ENCODE measurements at regions of chr2 and their contacts with region 1.

Region 1: GRCh38 chr2:5691975-5692529 is at the start of gene SOX11:
- DNase-seq: peak; percentile 74 to 96
- H3K4me3 ChIP-seq: peak within 1 kb of the TSS; percentile 75 to 100 (median 86)
- H3K27ac ChIP-seq: peak within 1 kb of the TSS; percentile 81
- H3K4me1 ChIP-seq: peaks cover 0 to 5% (median 0%) of the 10 kb centered on the region in 4 experiments; a peak in 1 of 7 replicates
- H3K27me3 ChIP-seq: no peaks in the 10 kb centered on the region
- CTCF ChIP-seq: no peak
- EP300 ChIP-seq: no peak
- POLR2A ChIP-seq: peak; percentile 60 to 89; a peak in 2 of 3 replicates
- RAD21 ChIP-seq: no peak
- total RNA-seq, gene SOX11: 55.6 and 56.5 TPM in 2 replicates

Region 2: DNA sequence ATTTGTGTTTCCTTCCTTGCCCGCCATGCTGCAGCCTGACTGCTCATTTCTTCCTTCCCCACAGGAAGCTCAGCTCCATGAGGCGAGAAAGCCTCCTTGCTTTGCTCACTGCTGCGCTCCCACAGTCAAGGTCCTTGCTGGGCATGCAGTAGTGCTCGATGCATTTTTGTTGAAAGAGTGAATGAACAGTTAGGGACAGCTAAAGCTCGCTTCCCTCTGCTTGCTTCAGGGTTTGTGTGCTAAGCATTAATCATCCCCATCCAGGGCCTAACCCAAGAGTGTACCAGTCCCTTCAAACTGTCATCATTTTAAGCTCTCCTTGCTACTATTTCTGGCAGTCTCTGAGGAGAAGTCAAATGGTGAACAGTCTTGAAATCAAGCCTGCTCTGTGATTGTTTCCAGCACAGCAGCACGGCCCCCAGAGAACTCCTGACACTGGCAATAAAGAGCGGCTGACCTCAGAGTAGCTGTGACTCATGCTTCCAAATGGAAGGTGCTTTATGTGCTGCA is 171.5 kb before region 1 on chr2:
- CTCF ChIA-PET with region 1: no interaction called
- POLR2A ChIA-PET with region 1: no interaction called
- DNase-seq: no peak
- H3K4me3 ChIP-seq: no peak overlapping the region
- H3K27ac ChIP-seq: no peak overlapping the region
- H3K4me1 ChIP-seq: peaks cover 0 to 4% (median 1%) of the 10 kb centered on the region in 4 experiments; a peak in 2 of 7 replicates
- H3K27me3 ChIP-seq: no peaks in the 10 kb centered on the region
- CTCF ChIP-seq: no peak
- EP300 ChIP-seq: no peak
- POLR2A ChIP-seq: no peak
- RAD21 ChIP-seq: no peak

Region 3: DNA sequence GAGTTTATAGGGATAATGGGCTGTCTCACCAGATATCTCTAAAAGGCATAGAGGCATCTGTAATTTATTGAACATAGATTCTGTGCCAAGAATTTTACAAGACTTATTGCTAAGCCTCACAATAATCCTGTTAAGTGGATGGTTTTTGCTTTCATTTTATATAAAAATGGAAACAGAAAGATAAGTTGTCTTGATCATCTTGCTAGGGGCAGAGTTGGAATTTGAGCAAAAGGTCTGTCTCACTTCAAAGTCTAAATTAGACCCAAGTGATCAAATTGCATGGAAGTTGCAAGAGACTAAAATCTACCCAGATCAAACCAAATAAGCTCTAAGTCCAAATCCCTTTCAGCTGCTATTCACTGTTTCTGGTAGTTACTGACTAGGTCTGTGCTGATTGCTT is 95.2 kb before region 1 on chr2:
- CTCF ChIA-PET with region 1: no interaction called
- POLR2A ChIA-PET with region 1: no interaction called
- DNase-seq: no peak
- H3K4me3 ChIP-seq: no peak overlapping the region
- H3K27ac ChIP-seq: no peak overlapping the region
- H3K4me1 ChIP-seq: no peaks in the 10 kb centered on the region
- H3K27me3 ChIP-seq: no peaks in the 10 kb centered on the region
- CTCF ChIP-seq: no peak
- EP300 ChIP-seq: no peak
- POLR2A ChIP-seq: no peak
- RAD21 ChIP-seq: no peak

Region 4: DNA sequence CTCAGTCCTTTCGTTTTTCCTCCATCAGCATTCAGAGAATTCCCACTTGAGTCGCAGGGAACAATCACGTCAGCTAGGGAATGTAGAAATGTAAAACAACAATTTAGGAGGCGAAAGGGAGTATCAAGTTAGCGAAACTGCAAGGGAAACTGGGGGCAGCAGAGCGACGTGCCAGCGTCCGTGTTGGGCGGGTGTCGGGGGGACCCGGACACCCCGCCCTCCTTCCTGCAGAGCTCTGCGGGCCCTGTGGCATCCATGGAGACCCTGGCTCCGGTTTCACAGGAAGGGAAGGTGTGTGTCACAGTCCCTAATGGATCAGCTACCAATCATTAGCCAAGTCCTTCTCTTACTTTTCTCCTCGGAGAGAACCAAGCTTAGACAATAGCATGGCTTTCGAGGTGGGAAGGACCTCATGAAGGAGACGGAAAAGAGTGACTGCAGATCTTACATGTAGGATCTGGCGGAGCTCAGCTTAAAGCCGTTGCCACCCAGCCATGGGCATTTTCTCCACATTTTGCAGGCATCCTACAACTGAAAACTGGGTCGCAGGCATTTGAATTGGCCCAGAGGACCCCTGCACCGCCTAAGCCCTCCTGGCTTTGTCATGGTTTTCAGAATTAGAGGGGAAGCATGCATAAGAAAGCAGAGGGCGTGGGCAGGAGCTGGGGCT is 33.9 kb after region 1 on chr2:
- CTCF ChIA-PET with region 1: interaction called, 5 read pairs
- POLR2A ChIA-PET with region 1: interaction called, 28 read pairs
- DNase-seq: peak; percentile 85 to 91
- H3K4me3 ChIP-seq: peak overlapping the region; percentile 37 to 59 (median 41)
- H3K27ac ChIP-seq: peak overlapping the region; percentile 86
- H3K4me1 ChIP-seq: peaks cover 0 to 26% (median 9%) of the 10 kb centered on the region in 4 experiments; a peak in 6 of 7 replicates
- H3K27me3 ChIP-seq: no peaks in the 10 kb centered on the region
- CTCF ChIP-seq: peak in 1 of 3 experiments; percentile 29; a peak in 1 of 4 replicates
- EP300 ChIP-seq: peak in 1 of 2 experiments; percentile 94; a peak in 2 of 3 replicates
- POLR2A ChIP-seq: peak in 1 of 2 experiments; percentile 46; a peak in 1 of 3 replicates
- RAD21 ChIP-seq: peak; percentile 32 to 41; a peak in 3 of 4 replicates

Measured in H1 (cell line).